ENCODE measurements at regions of chr14 and their contacts with region 1.

Region 1: GRCh38 chr14:57486767-57487379 is 6.8 kb downstream of the CCDC198 start:
- DNase-seq: peak in 1 of 2 donors; percentile 5
- H3K4me3 ChIP-seq: no peak overlapping the region
- H3K27ac ChIP-seq: no peak overlapping the region
- H3K4me1 ChIP-seq: no peaks in the 10 kb centered on the region
- H3K27me3 ChIP-seq: no peaks in the 10 kb centered on the region
- CTCF ChIP-seq: peak; percentile 43 to 72 (median 58)
- POLR2A ChIP-seq: no peak

Region 2: DNA sequence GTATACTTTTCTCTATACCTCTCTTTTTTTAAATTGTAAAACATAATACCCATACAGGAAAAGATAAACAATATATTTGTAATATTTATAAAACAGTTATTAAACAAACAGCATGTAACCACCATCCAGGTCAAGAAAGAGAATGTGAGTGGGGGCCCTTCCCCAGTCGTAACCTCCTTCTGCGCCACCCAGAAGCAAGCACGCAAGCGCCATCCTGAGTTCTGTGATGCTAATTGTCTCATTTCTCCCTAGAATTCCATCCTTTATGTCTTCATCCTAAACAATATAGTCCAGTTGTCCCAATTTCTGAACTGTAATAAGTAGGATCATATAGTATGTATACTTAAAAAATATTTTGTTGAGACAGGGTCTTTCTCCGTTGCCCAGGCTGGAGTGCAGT is 347.7 kb before region 1 on chr14:
- intact Hi-C with region 1: no loop called
- DNase-seq: no peak
- H3K4me3 ChIP-seq: no peak overlapping the region
- H3K27ac ChIP-seq: no peak overlapping the region
- H3K4me1 ChIP-seq: no peaks in the 10 kb centered on the region
- H3K27me3 ChIP-seq: no peaks in the 10 kb centered on the region
- CTCF ChIP-seq: no peak
- POLR2A ChIP-seq: no peak

Region 3: GRCh38 chr14:57568554-57568953 is 81.7 kb after region 1 on chr14:
- intact Hi-C with region 1: no loop called
- DNase-seq: no peak
- H3K4me3 ChIP-seq: no peak overlapping the region
- H3K27ac ChIP-seq: no peak overlapping the region
- H3K4me1 ChIP-seq: no peaks in the 10 kb centered on the region
- H3K27me3 ChIP-seq: no peaks in the 10 kb centered on the region
- CTCF ChIP-seq: no peak
- POLR2A ChIP-seq: no peak

Region 4: GRCh38 chr14:58066115-58066514 is 579.2 kb after region 1 on chr14:
- intact Hi-C with region 1: loop called (anchors 5 kb)
- DNase-seq: no peak
- H3K4me3 ChIP-seq: no peak overlapping the region
- H3K27ac ChIP-seq: no peak overlapping the region
- H3K4me1 ChIP-seq: no peaks in the 10 kb centered on the region
- H3K27me3 ChIP-seq: no peaks in the 10 kb centered on the region
- CTCF ChIP-seq: no peak
- POLR2A ChIP-seq: no peak

Measured in thyroid gland (tissue), 4 donors.